Panc1 (cell line): ENCODE measurements at regions of chr2 and their contacts with region 1.

Region 1: GRCh38 chr2:168346725-168347477 is 99.5 kb upstream of the STK39 start:
- DNase-seq: peak; percentile 47
- ATAC-seq: peak; percentile 95
- H3K4me3 ChIP-seq: peak overlapping the region; percentile 54 to 79
- H3K27ac ChIP-seq: peak overlapping the region; percentile 65; the same call in 1 of the 2 replicates
- H3K4me1 ChIP-seq: peaks cover 3% of the 10 kb centered on the region; the same call in 1 of the 2 replicates
- H3K27me3 ChIP-seq: no peaks in the 10 kb centered on the region; the same call in 1 of the 2 replicates
- CTCF ChIP-seq: peak; percentile 83

Region 2: GRCh38 chr2:168687314-168687713 is 340.4 kb after region 1 on chr2:
- CTCF ChIA-PET with region 1: no interaction called
- POLR2A ChIA-PET with region 1: no interaction called
- in situ Hi-C with region 1: no loop called
- intact Hi-C with region 1: loop called (anchors 2 kb)
- DNase-seq: no peak
- ATAC-seq: peak; percentile 53; the same call in 1 of the 2 replicates
- H3K4me3 ChIP-seq: no peak overlapping the region
- H3K27ac ChIP-seq: no peak overlapping the region
- H3K4me1 ChIP-seq: no peaks in the 10 kb centered on the region
- H3K27me3 ChIP-seq: no peaks in the 10 kb centered on the region
- CTCF ChIP-seq: peak; percentile 49

Region 3: DNA sequence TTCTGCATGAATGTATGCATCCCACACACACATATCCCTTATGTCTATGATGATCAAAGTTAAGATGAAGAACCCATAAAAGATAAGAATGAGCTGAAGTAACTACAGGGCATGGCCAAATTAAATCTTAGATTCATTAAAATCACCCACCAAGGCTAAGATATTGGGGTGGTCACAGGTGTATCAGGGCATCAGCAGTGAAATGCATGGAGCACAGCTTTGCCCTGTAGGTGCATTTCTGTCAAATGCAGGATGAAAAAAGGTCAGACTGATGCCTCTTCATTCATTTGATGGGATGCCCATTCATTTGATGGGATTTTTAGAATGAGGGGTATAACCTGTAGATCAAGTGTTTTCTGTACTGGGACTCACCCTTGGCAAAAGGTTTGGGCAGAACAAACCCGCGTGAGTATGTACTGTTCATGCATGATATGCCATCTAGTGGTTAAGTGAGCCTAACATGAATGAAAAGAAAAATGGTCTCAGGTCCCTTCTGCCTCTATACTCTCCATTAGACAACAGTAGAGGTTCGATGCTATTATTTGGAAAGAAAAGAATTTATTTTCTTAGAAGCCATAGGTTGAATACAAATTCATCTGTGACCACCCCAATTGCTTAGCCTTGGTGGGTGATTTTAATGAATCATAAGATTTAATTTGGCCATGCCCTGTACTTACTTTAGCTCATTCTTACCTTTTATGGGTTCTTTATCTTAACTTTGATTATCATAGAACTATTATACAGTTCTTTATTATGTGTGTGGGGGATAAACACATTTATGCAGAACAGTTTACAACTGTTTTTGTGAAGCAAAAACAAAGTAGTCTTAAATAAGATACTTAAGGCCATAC is 412.3 kb after region 1 on chr2:
- CTCF ChIA-PET with region 1: interaction called, 3 read pairs
- POLR2A ChIA-PET with region 1: no interaction called
- in situ Hi-C with region 1: no loop called
- intact Hi-C with region 1: loop called (anchors 1 kb)
- DNase-seq: no peak
- ATAC-seq: peak; percentile 94
- H3K4me3 ChIP-seq: no peak overlapping the region
- H3K27ac ChIP-seq: no peak overlapping the region
- H3K4me1 ChIP-seq: no peaks in the 10 kb centered on the region
- H3K27me3 ChIP-seq: no peaks in the 10 kb centered on the region
- CTCF ChIP-seq: peak; percentile 71

Region 4: DNA sequence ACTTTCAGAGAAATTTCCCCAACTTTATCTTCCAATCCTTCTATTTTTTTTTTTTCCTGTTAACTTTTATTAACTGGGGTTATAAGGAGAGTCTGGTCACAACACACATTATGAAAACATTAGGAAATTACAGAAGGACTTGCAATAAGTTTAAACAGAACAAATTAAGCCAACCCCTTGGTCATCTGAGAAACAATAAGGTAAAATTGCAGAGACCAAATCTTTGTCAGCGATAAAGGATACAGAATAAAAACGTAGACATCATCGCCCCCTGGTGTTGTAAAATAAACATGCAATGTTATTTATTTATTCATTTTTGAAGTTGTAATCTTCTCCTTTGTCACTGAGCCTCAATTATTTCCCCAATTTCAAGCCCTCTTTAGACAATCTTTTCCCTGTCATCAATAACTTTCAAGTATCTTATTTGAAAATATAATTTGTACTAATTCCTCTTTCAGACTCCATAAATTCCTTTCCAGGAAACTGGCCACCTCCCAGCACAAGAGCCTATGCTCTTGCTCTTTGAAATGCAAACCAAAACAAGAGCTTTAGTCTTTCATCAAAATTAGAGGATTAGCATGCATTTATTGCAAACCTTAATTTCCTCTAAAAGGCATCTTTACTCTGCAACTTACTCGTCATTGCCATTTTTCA is 573.7 kb after region 1 on chr2:
- CTCF ChIA-PET with region 1: interaction called, 3 read pairs
- POLR2A ChIA-PET with region 1: no interaction called
- in situ Hi-C with region 1: no loop called
- intact Hi-C with region 1: loop called (anchors 1 kb)
- DNase-seq: no peak
- ATAC-seq: peak; percentile 58; the same call in 1 of the 2 replicates
- H3K4me3 ChIP-seq: no peak overlapping the region
- H3K27ac ChIP-seq: no peak overlapping the region
- H3K4me1 ChIP-seq: no peaks in the 10 kb centered on the region
- H3K27me3 ChIP-seq: peaks cover 8% of the 10 kb centered on the region
- CTCF ChIP-seq: peak; percentile 69; the same call in 1 of the 2 replicates